Head of caudate nucleus (tissue), 42 donors: ENCODE measurements at regions of chr1 and their contacts with region 1.

Region 1: DNA sequence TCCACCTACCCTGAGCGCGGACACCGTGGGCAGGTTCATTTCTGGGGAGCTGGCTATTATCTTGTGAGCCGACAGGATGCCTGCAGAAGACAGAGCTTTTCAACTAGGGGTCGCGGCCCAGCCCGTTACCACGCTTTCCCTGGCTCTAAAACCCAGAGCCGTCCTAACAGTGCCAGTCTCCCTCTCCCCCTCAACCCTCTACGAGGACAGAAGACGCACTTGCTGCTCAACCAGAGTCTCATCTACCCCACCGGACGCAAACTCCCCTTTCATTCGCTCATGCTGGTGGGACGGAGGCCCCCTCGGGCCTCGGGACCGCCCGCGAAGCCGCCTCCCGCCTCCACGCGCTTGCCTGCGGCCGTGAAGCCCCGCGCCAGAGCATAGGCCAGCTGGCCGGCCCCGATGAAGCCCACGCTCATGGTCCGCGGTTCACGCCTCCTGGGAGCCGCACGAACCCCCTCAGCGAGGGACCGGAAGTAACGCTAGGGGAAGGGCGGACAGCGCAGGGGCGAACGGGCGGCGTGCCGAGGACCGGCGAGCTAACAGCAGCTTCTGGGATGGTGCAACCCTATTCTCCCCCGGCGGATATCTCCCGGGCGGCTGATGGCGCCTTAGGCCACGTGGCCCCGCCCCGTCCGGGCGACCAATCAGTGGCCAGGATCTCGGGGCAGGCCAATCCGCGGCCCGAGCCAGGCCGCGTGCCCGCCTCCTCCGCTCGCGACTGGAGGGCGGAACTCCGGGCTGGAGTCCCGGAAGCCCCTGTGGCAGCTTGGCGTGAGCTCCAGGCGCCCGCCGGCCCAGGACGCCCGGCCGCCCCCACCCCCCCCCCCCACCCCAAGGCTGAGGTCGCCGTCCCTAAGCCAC is at the start of gene PYCR2:
- DNase-seq: peak; percentile 89 to 98 (median 95)

Region 2: GRCh38 chr1:225877580-225877979 is 46.3 kb before region 1 on chr1:
- intact Hi-C with region 1: loop called (anchors 5 kb)
- DNase-seq: peak; percentile 75 to 97 (median 92)